PC-3 (cell line): ENCODE measurements at regions of chr3 and their contacts with region 1.

Region 1: GRCh38 chr3:159944781-159945180 is 43.9 kb upstream of the IL12A start:
- DNase-seq: no peak
- ATAC-seq: no peak
- H3K4me3 ChIP-seq: no peak overlapping the region
- H3K27ac ChIP-seq: no peak overlapping the region
- H3K4me1 ChIP-seq: peaks cover 15% of the 10 kb centered on the region
- H3K27me3 ChIP-seq: no peaks in the 10 kb centered on the region
- CTCF ChIP-seq: no peak

Region 2: GRCh38 chr3:159486586-159486985 is 458.2 kb before region 1 on chr3:
- CTCF ChIA-PET with region 1: no interaction called
- POLR2A ChIA-PET with region 1: no interaction called
- intact Hi-C with region 1: no loop called
- DNase-seq: peak; percentile 47
- ATAC-seq: no peak
- H3K4me3 ChIP-seq: no peak overlapping the region
- H3K27ac ChIP-seq: no peak overlapping the region
- H3K4me1 ChIP-seq: no peaks in the 10 kb centered on the region
- H3K27me3 ChIP-seq: peaks cover 20% of the 10 kb centered on the region
- CTCF ChIP-seq: peak; percentile 63

Region 3: GRCh38 chr3:159872374-159873109 is 72.2 kb before region 1 on chr3:
- CTCF ChIA-PET with region 1: no interaction called
- POLR2A ChIA-PET with region 1: no interaction called
- intact Hi-C with region 1: no loop called
- DNase-seq: peak; percentile 92
- ATAC-seq: peak; percentile 95
- H3K4me3 ChIP-seq: no peak overlapping the region
- H3K27ac ChIP-seq: peak overlapping the region; percentile 61
- H3K4me1 ChIP-seq: peaks cover 30% of the 10 kb centered on the region
- H3K27me3 ChIP-seq: no peaks in the 10 kb centered on the region
- CTCF ChIP-seq: peak; percentile 50

Region 4: DNA sequence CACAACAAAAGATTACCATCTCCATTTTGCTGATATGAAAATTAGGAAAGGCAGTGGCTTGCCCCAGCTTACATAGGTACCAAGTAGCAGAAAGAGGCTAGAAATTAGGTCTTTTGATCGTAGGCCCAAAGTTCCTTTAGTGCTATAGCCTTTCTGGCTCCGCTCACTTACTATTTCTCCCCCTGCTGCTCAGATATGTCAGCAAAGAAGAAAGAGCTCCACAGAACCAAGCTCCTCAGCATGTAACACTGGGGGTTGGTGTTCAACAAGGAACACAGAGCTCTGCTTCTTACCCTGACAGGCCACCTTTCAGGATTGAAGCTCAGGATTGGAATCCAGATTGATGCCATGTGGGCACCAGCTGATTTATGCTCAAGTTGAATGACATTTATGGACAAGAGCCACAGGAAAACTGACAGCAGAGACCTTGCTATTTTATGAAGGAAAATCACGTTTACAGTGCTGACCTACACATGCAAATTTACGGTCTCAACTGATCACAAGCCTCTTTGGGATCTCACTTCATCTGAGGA is 37.7 kb after region 1 on chr3:
- CTCF ChIA-PET with region 1: no interaction called
- POLR2A ChIA-PET with region 1: no interaction called
- intact Hi-C with region 1: loop called (anchors 2 kb)
- DNase-seq: no peak
- ATAC-seq: no peak
- H3K4me3 ChIP-seq: no peak overlapping the region
- H3K27ac ChIP-seq: no peak overlapping the region
- H3K4me1 ChIP-seq: peaks cover 3% of the 10 kb centered on the region; the same call in 1 of the 2 replicates
- H3K27me3 ChIP-seq: no peaks in the 10 kb centered on the region
- CTCF ChIP-seq: no peak

Region 5: DNA sequence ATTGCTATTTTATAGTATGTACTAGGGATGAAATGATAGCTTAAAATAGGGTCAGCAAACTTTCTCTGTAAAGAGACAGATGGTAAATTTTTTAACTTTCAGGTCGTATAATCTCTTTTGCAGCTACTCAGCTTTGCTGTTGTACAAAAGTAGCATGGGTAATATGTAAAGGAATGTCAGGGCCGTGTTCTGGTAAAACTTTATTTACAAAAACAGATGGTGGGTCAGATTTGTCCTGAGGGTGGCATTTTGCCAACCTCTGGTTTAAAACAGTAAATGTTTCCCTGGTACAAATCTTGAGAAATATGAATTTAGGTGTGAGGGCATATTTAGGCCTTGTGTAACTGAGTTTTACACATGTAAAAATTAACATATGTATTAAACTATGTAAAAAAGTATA is 1294.9 kb after region 1 on chr3:
- CTCF ChIA-PET with region 1: no interaction called
- POLR2A ChIA-PET with region 1: no interaction called
- intact Hi-C with region 1: no loop called
- DNase-seq: no peak
- ATAC-seq: no peak
- H3K4me3 ChIP-seq: no peak overlapping the region
- H3K27ac ChIP-seq: no peak overlapping the region
- H3K4me1 ChIP-seq: no peaks in the 10 kb centered on the region
- H3K27me3 ChIP-seq: no peaks in the 10 kb centered on the region
- CTCF ChIP-seq: no peak